ENCODE measurements at regions of chrX and their contacts with region 1.

Region 1: GRCh38 chrX:57241967-57242366 is 44.5 kb upstream of the FAAH2 start:
- DNase-seq: no peak
- ATAC-seq: no peak
- H3K4me3 ChIP-seq: no peak overlapping the region
- H3K27ac ChIP-seq: no peak overlapping the region
- H3K4me1 ChIP-seq: no peaks in the 10 kb centered on the region
- H3K27me3 ChIP-seq: no peaks in the 10 kb centered on the region
- CTCF ChIP-seq: no peak
- POLR2A ChIP-seq: no peak
- RAD21 ChIP-seq: no peak

Region 2: DNA sequence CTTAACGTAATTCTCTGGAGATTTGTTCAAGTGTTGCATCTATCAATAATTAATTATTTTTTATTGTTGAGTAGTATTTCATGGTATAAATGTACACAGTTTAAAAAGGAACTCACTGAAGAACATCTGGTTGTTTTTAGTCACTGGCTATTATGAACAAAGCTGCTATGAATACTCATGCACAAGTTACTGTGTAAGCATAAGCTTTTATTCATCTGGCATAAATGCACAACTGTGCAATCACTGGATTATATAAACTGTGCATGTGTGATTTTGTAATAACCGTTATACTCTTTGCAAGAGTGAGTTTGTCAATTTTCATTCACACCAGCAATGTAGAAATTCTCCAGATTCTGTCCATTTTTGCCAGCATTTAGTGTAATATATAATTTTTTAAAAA is 722.3 kb before region 1 on chrX:
- CTCF ChIA-PET with region 1: no interaction called
- POLR2A ChIA-PET with region 1: no interaction called
- dilution Hi-C with region 1: no loop called
- in situ Hi-C with region 1: no loop called
- intact Hi-C with region 1: loop called (anchors 5 kb)
- DNase-seq: no peak
- ATAC-seq: no peak
- H3K4me3 ChIP-seq: no peak overlapping the region
- H3K27ac ChIP-seq: no peak overlapping the region
- H3K4me1 ChIP-seq: no peaks in the 10 kb centered on the region
- H3K27me3 ChIP-seq: no peaks in the 10 kb centered on the region
- CTCF ChIP-seq: no peak
- POLR2A ChIP-seq: no peak
- RAD21 ChIP-seq: no peak

Region 3: GRCh38 chrX:57132046-57132445 is 109.9 kb before region 1 on chrX:
- CTCF ChIA-PET with region 1: no interaction called
- POLR2A ChIA-PET with region 1: no interaction called
- dilution Hi-C with region 1: no loop called
- in situ Hi-C with region 1: no loop called
- intact Hi-C with region 1: no loop called
- DNase-seq: no peak
- ATAC-seq: no peak
- H3K4me3 ChIP-seq: no peak overlapping the region
- H3K27ac ChIP-seq: no peak overlapping the region
- H3K4me1 ChIP-seq: no peaks in the 10 kb centered on the region
- H3K27me3 ChIP-seq: no peaks in the 10 kb centered on the region
- CTCF ChIP-seq: no peak
- POLR2A ChIP-seq: no peak
- RAD21 ChIP-seq: no peak

Measured in IMR-90 (cell line).